ENCODE measurements at regions of chr12 and their contacts with region 1.

Region 1: GRCh38 chr12:56143870-56144269 is 8.5 kb upstream of the MYL6B start:
- DNase-seq: no peak
- ATAC-seq: no peak
- H3K4me3 Mint-ChIP-seq: no peak overlapping the region
- H3K27ac Mint-ChIP-seq: peak overlapping the region; percentile 83
- H3K4me1 Mint-ChIP-seq: peaks cover 32% of the 10 kb centered on the region
- H3K27me3 Mint-ChIP-seq: no peaks in the 10 kb centered on the region
- CTCF ChIP-seq: no peak

Region 2: GRCh38 chr12:56127888-56128669 is 15.8 kb before region 1 on chr12 and contains the start of gene ESYT1:
- CTCF ChIA-PET with region 1: interaction called, 18 read pairs
- POLR2A ChIA-PET with region 1: interaction called, 23 read pairs
- intact Hi-C with region 1: no loop called
- DNase-seq: peak; percentile 99
- ATAC-seq: peak; percentile 92
- H3K4me3 Mint-ChIP-seq: peak within 1 kb of the TSS; percentile 84
- H3K27ac Mint-ChIP-seq: peak within 1 kb of the TSS; percentile 93
- H3K4me1 Mint-ChIP-seq: peaks cover 53% of the 10 kb centered on the region
- H3K27me3 Mint-ChIP-seq: no peaks in the 10 kb centered on the region
- CTCF ChIP-seq: no peak
- total RNA-seq, gene ESYT1: 154 to 160 TPM

Measured in activated CD8-positive, alpha-beta T cell treated with anti-CD3 and anti-CD28 coated beads for 36 hours (primary cell).